Activated CD4-positive, alpha-beta T cell treated with anti-CD3 and anti-CD28 coated beads for 36 hours (primary cell): ENCODE measurements at regions of chr10 and their contacts with region 1.

Region 1: GRCh38 chr10:101141616-101142532 is 10.8 kb downstream of the TLX1 start:
- DNase-seq: peak; percentile 91
- ATAC-seq: peak; percentile 90
- H3K4me3 Mint-ChIP-seq: no peak overlapping the region
- H3K27ac Mint-ChIP-seq: no peak overlapping the region
- H3K4me1 Mint-ChIP-seq: peaks cover 19% of the 10 kb centered on the region
- H3K27me3 Mint-ChIP-seq: peaks cover 78% of the 10 kb centered on the region

Region 2: GRCh38 chr10:101042667-101043355 is 99.1 kb before region 1 on chr10:
- CTCF ChIA-PET with region 1: interaction called, 24 read pairs
- POLR2A ChIA-PET with region 1: no interaction called
- intact Hi-C with region 1: loop called in 1 of 2 experiments (anchors 1 kb)
- DNase-seq: peak; percentile 96
- ATAC-seq: peak; percentile 96
- H3K4me3 Mint-ChIP-seq: peak overlapping the region; percentile 79
- H3K27ac Mint-ChIP-seq: peak overlapping the region; percentile 79
- H3K4me1 Mint-ChIP-seq: peaks cover 21% of the 10 kb centered on the region
- H3K27me3 Mint-ChIP-seq: peaks cover 14% of the 10 kb centered on the region

Region 3: DNA sequence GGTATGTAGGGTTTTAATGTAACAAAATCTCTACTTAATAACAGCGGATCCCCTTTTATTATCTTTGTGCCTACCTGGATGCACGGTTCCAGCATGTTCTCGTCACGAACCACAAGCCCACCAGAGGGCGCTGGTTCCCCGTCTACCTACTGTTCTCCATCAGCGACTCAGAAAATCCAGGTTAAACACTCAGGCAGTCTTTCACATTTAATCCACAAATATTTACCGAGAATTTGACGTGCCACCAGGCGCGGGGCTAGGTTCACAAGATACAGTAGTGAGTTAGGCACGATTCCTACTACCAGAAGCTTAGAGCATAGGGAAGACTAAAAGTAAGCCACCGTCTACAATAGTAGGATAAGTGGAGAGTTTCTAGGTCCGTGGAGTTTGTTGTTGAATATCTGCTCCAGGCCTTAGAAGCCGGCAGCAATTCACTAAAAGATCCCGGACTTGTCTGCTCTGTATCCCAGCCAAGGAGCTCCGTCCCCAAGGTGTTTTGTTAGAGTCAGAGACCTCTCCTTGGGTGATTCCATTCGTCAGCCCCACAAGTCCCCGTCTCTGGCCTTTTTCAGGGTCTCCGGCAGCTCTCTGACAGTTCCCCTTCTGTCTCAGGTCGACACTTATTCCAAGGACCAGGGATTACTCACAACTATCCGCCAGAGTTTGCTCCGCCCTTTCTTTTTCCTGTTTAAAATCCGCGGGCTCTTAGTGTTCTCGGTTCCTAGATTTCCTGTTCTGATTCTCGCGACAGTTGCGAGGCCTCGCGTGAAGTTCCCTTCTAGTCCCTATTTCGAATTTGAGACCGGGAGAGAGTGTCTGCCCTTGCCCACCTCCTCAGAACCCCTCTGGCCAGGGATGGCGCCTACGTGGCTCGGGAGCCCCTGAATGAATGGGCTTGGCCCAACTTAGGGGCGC is 81.6 kb before region 1 on chr10:
- CTCF ChIA-PET with region 1: interaction called, 27 read pairs
- POLR2A ChIA-PET with region 1: interaction called, 4 read pairs
- intact Hi-C with region 1: loop called in 1 of 2 experiments (anchors 1 kb)
- DNase-seq: peak; percentile 95
- ATAC-seq: peak; percentile 75
- H3K4me3 Mint-ChIP-seq: peak overlapping the region; percentile 82
- H3K27ac Mint-ChIP-seq: peak overlapping the region; percentile 96
- H3K4me1 Mint-ChIP-seq: peaks cover 22% of the 10 kb centered on the region
- H3K27me3 Mint-ChIP-seq: peaks cover 22% of the 10 kb centered on the region

Region 4: DNA sequence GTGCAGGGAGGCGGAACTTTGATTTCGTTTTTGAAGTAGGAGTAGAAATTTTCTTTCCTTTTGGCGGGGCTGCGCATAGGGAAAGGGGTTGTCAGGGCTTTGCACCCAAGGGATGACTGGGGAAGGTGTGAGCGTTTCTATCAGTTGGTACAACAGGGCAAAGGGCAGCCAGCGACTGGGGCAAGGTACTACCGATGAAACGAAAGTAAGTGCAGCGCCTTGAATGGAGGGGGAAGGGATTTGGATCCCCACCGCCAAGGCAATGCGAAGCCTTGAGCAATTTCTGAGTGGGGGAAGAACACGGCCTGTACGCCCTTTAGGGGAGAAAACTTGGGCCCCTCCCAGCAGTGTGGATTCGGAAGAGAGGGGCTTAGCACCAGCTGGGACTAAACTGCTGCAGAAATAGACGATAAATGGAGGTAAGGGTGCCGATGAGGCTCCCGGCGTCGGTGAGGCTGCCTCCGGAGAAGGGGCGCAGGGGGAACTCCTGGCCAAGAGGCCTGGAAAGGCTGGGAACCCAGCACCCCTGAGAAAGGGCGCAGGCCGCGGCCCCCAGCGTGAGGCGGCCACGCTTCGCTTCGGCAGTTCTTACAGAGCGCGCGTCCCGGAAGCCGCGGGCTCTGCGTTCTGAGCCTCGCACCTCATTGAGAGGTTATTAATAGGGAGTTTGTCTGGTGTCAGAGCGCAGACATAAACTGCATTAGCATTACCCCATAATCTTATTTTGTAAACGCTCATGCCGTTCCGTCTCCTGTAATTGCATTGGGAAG is 20.8 kb before region 1 on chr10:
- CTCF ChIA-PET with region 1: interaction called, 58 read pairs
- POLR2A ChIA-PET with region 1: interaction called, 4 read pairs
- intact Hi-C with region 1: loop called in 1 of 2 experiments (anchors 2 kb)
- DNase-seq: peak; percentile 66
- ATAC-seq: peak; percentile 81
- H3K4me3 Mint-ChIP-seq: peak overlapping the region; percentile 79
- H3K27ac Mint-ChIP-seq: peak overlapping the region; percentile 90
- H3K4me1 Mint-ChIP-seq: peaks cover 26% of the 10 kb centered on the region
- H3K27me3 Mint-ChIP-seq: peaks cover 45% of the 10 kb centered on the region

Region 5: DNA sequence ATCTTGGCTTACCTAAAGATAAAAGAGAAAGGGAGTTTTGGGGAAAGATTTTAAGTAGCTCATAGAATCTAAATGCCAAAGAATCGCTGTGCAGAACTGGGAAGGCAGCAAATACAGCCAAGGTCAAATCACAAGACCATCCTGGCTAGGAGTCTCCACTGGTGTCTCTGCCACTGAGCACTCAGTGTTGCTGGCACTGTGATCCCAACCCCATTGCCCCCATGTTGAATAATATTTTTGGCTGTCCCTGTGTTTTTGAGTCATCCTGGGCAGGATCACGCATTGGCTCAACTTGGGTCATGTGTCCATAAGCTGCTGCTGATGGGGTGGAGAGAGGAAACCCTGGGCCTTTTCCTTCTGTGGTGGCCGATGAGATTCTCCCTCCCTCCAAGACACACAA is 10.4 kb after region 1 on chr10:
- CTCF ChIA-PET with region 1: interaction called, 21 read pairs
- POLR2A ChIA-PET with region 1: no interaction called
- intact Hi-C with region 1: no loop called
- DNase-seq: no peak
- ATAC-seq: no peak
- H3K4me3 Mint-ChIP-seq: no peak overlapping the region
- H3K27ac Mint-ChIP-seq: no peak overlapping the region
- H3K4me1 Mint-ChIP-seq: no peaks in the 10 kb centered on the region
- H3K27me3 Mint-ChIP-seq: peaks cover 70% of the 10 kb centered on the region

Region 6: GRCh38 chr10:101182936-101183335 is 41.1 kb after region 1 on chr10:
- CTCF ChIA-PET with region 1: interaction called, 12 read pairs
- POLR2A ChIA-PET with region 1: no interaction called
- intact Hi-C with region 1: no loop called
- DNase-seq: no peak
- ATAC-seq: peak; percentile 19
- H3K4me3 Mint-ChIP-seq: no peak overlapping the region
- H3K27ac Mint-ChIP-seq: no peak overlapping the region
- H3K4me1 Mint-ChIP-seq: no peaks in the 10 kb centered on the region
- H3K27me3 Mint-ChIP-seq: peaks cover 23% of the 10 kb centered on the region